T-cell (primary cell): ENCODE measurements at regions of chr19 and their contacts with region 1.

Region 1: GRCh38 chr19:45558399-45558878 is 26.2 kb downstream of the OPA3 start:
- DNase-seq: peak; percentile 36 to 86 (median 69)
- ATAC-seq: peak; percentile 86 to 94 (median 90)
- H3K4me3 ChIP-seq: no peak overlapping the region
- H3K4me3 Mint-ChIP-seq: peak overlapping the region in 1 of 3 donors; percentile 3
- H3K27ac ChIP-seq: no peak overlapping the region
- H3K27ac Mint-ChIP-seq: peak overlapping the region; percentile 41 to 48
- H3K4me1 ChIP-seq: peaks cover 3 to 46% of the 10 kb centered on the region in 2 experiments
- H3K4me1 Mint-ChIP-seq: peaks cover 31 to 51% (median 36%) of the 10 kb centered on the region in 3 donors
- H3K27me3 ChIP-seq: no peaks in the 10 kb centered on the region
- H3K27me3 Mint-ChIP-seq: no peaks in the 10 kb centered on the region

Region 2: DNA sequence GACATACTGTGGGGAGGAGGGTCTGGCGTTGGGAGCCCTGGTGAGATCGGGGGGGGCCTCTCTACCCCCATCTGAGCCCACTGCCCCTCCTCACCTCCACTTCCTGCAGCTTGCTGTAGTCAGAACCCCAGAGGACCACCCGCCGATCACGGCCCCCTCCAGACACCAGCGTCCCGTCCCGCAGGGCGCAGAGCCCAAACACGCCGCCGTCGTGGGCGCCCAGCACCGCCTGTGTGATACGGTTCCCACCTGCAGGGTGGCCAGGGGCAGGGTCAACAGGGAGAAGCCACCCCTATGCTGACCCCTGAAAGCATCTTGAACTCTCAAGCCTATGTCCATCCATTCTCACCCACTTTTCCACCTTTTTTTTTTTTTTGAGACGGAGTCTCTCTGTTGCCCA is 63.0 kb after region 1 on chr19:
- CTCF ChIA-PET with region 1: no interaction called
- POLR2A ChIA-PET with region 1: no interaction called
- DNase-seq: no peak
- ATAC-seq: no peak
- H3K4me3 ChIP-seq: no peak overlapping the region
- H3K4me3 Mint-ChIP-seq: no peak overlapping the region
- H3K27ac ChIP-seq: no peak overlapping the region
- H3K27ac Mint-ChIP-seq: no peak overlapping the region
- H3K4me1 ChIP-seq: no peaks in the 10 kb centered on the region
- H3K4me1 Mint-ChIP-seq: peaks cover 0 to 2% (median 0%) of the 10 kb centered on the region in 3 donors
- H3K27me3 ChIP-seq: no peaks in the 10 kb centered on the region
- H3K27me3 Mint-ChIP-seq: no peaks in the 10 kb centered on the region

Region 3: GRCh38 chr19:45862564-45863334 is 304.3 kb after region 1 on chr19 and contains the start of gene SYMPK:
- CTCF ChIA-PET with region 1: no interaction called
- POLR2A ChIA-PET with region 1: interaction called in 1 of 2 experiments, 12 read pairs
- DNase-seq: peak; percentile 95 to 99 (median 98)
- ATAC-seq: peak; percentile 96 to 98 (median 98)
- H3K4me3 ChIP-seq: peak within 1 kb of the TSS; percentile 90 to 95
- H3K4me3 Mint-ChIP-seq: peak within 1 kb of the TSS; percentile 92 to 99 (median 95)
- H3K27ac ChIP-seq: peak within 1 kb of the TSS; percentile 86
- H3K27ac Mint-ChIP-seq: peak within 1 kb of the TSS; percentile 70 to 93
- H3K4me1 ChIP-seq: peaks cover 0 to 32% of the 10 kb centered on the region in 2 experiments
- H3K4me1 Mint-ChIP-seq: peaks cover 23 to 43% (median 33%) of the 10 kb centered on the region in 3 donors
- H3K27me3 ChIP-seq: peaks cover 0 to 26% of the 10 kb centered on the region in 2 experiments
- H3K27me3 Mint-ChIP-seq: peaks cover 15 to 18% of the 10 kb centered on the region in 2 donors
- total RNA-seq, gene SYMPK: 89.7 to 102 (median 94.7) TPM